Activated T-helper 1 cell treated with anti-CD3 and anti-CD28 coated beads, Interleukin-12 subunit alpha, Interleukin-12 subunit beta, Interleukin-2, Interleukin-4 antibody, amounts not matched to agents 30 ng/mL and 10 ng/mL and 1 ng/mL, durations not matched to agents 14 hours and 24 hours and 36 hours (primary cell): ENCODE measurements at regions of chr2 and their contacts with region 1.

Region 1: DNA sequence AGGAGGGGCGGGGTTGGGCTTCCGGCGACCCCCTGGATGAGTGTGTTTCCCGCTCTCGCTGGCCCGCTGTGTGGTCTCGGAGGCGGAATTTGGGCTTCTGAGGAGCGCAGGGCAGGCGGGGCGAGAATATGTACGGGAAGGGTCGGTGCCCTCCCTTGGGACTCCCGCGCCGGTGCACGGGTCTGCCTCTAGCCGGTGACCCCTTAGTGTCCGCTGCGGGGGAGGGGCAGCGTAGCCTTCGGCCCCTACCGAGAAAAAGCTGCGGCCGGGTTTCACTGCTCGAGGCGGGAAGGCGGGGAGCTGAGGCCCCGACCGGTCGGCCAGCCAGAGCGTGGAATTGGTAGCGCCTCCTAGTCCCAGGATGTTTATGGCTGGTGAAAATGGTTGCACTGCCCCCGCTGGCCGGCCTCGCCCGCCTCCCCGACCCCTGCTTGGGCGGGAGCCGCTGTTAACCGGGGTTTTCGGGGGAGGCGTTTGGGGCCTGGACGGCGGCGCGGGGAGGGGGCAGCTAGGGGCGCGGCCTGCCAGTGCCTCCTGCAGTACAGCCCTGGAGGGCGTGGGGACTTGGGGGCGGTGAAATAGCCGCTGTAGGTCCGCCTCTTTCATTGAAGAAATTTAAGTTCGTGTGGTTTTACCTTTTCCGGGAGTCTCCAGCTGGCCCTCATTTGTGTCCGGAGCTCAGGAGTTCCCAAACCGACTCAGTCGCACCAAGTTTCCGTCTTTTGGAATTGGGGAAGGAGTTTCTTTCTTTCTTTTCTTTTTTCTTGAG is at the start of gene UGP2:
- DNase-seq: peak; percentile 83
- H3K4me3 Mint-ChIP-seq: peak within 1 kb of the TSS; percentile 99
- H3K27ac Mint-ChIP-seq: peak within 1 kb of the TSS; percentile 99
- H3K4me1 Mint-ChIP-seq: peaks cover 47% of the 10 kb centered on the region
- H3K27me3 Mint-ChIP-seq: no peaks in the 10 kb centered on the region
- total RNA-seq, gene UGP2: 60.3 and 65.9 TPM in 2 replicates

Region 2: DNA sequence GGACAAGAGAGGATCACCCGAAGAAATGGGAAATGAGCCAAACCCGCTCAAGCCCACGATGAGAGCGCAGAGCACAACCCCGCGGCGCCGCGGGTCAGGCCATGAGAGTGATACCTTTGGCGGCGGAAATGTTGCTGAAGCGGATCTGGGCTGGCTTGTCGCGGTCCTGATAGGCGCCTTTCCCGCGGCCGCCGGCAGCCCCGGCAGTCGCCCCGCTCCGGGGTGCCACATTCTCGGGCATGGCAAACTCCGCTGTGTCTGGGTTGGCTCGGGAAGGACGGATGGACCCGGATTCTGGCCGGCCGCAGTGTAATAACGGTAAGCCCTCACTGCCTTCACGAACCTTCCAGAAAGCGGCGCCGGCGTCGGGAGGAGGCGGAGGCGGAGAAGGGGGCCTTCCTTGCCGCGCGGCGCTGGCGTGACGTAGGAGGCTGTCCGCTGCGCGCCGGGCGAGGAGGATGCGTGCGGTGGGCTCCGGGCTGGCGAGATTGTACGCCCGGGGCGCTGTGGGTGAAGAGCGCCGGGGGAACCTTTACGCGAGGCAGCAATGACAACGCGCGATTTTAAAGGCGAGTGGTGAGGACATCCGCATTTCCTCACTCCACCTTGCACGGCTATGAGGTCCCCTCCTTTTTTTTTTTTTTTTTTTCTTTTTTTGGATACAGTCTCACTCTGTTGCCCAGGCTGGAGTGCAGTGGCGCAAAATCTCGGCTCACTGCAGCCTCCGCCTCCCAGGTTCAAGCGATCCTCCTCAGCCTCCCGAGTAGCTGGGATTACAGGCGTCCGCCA is 1953.0 kb before region 1 on chr2 and contains the start of gene CCT4:
- intact Hi-C with region 1: loop called (anchors 10 kb)
- DNase-seq: peak; percentile 86
- H3K4me3 Mint-ChIP-seq: peak within 1 kb of the TSS; percentile 95
- H3K27ac Mint-ChIP-seq: peak within 1 kb of the TSS; percentile 97
- H3K4me1 Mint-ChIP-seq: peaks cover 23% of the 10 kb centered on the region
- H3K27me3 Mint-ChIP-seq: no peaks in the 10 kb centered on the region
- total RNA-seq, gene CCT4: 354 and 381 TPM in 2 replicates

Region 3: GRCh38 chr2:63692002-63692606 is 149.3 kb before region 1 on chr2:
- intact Hi-C with region 1: loop called (anchors 5 kb)
- DNase-seq: no peak
- H3K4me3 Mint-ChIP-seq: no peak overlapping the region
- H3K27ac Mint-ChIP-seq: no peak overlapping the region
- H3K4me1 Mint-ChIP-seq: no peaks in the 10 kb centered on the region
- H3K27me3 Mint-ChIP-seq: peaks cover 4% of the 10 kb centered on the region

Region 4: DNA sequence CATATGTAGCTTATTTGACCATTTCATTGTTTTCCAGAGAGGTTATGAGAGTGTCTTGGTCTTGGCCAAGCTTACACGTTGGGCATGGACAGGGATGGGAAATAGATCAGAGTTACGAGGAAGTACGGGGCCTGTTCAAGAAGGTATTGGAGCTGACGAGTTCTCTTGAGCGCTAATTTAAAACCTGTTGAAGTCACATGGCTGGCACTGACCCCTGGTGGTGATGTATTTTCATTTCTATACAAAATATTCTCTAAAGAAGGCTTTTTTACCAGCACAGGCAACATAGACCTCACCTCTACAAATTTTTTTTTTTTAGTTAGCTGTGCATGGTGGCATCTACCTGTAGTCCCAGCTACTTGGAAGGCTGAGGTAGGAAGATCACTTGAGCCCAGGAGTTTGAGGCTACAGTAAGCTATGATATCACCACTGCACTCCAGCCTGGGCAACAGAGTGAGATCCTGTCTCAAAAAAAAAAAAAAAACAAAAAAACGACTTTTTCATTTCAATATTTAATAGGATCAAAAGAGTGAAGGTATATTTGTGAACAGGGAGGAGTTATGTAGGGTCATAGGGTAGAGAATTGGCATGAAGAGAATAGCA is 19.9 kb after region 1 on chr2:
- intact Hi-C with region 1: loop called (anchors 1 kb)
- DNase-seq: peak; percentile 26
- H3K4me3 Mint-ChIP-seq: no peak overlapping the region
- H3K27ac Mint-ChIP-seq: no peak overlapping the region
- H3K4me1 Mint-ChIP-seq: peaks cover 42% of the 10 kb centered on the region
- H3K27me3 Mint-ChIP-seq: no peaks in the 10 kb centered on the region

Region 5: GRCh38 chr2:64144057-64145013 is 302.9 kb after region 1 on chr2 and contains the start of gene PELI1:
- intact Hi-C with region 1: loop called (anchors 1 kb)
- DNase-seq: peak; percentile 90
- H3K4me3 Mint-ChIP-seq: peak within 1 kb of the TSS; percentile 98
- H3K27ac Mint-ChIP-seq: peak within 1 kb of the TSS; percentile 97
- H3K4me1 Mint-ChIP-seq: peaks cover 28% of the 10 kb centered on the region
- H3K27me3 Mint-ChIP-seq: peaks cover 3% of the 10 kb centered on the region
- total RNA-seq, gene PELI1: 47.1 and 50.4 TPM in 2 replicates

Region 6: DNA sequence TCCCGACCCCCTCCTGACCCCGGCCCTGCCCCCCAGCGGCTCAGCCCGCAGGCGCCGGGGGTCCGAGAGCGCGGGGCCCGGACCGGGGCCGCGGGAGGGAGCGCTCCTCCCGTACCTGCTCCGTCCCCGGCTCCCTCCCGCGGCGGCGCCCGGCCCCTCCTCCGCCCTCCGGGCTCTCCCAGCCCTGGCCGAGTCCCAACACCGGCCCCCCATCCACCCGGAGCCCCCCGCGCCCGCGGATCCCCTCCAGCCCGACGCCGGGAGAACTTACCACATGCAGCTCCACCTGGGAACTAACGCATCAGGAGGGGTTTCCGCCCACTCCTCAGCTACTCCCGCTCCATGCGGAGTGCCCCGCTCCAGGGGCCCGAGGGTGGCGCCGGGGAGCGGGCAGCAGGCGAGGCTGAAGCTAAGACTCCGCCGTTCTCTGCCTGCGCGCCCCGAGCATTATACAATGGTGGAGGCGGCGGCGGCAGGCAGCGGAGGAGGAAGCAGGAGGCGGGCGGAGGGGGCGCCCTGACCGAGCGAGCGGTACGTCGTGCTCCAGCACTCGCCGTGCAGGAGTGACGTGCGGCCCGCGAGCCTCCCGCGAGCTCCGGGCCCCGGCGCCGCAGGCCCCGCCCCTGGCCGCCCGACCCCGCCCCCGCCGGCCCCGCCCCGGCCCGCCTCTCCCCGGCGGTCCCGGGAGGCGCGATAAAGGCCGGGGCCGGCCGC is 812.1 kb after region 1 on chr2 and contains the start of gene SERTAD2:
- intact Hi-C with region 1: loop called (anchors 10 kb)
- DNase-seq: peak; percentile 83
- H3K4me3 Mint-ChIP-seq: peak within 1 kb of the TSS; percentile 90
- H3K27ac Mint-ChIP-seq: peak within 1 kb of the TSS; percentile 90
- H3K4me1 Mint-ChIP-seq: peaks cover 71% of the 10 kb centered on the region
- H3K27me3 Mint-ChIP-seq: no peaks in the 10 kb centered on the region
- total RNA-seq, gene SERTAD2: 27.3 and 28.5 TPM in 2 replicates